ENCODE measurements at regions of chr1 and their contacts with region 1.

Region 1: DNA sequence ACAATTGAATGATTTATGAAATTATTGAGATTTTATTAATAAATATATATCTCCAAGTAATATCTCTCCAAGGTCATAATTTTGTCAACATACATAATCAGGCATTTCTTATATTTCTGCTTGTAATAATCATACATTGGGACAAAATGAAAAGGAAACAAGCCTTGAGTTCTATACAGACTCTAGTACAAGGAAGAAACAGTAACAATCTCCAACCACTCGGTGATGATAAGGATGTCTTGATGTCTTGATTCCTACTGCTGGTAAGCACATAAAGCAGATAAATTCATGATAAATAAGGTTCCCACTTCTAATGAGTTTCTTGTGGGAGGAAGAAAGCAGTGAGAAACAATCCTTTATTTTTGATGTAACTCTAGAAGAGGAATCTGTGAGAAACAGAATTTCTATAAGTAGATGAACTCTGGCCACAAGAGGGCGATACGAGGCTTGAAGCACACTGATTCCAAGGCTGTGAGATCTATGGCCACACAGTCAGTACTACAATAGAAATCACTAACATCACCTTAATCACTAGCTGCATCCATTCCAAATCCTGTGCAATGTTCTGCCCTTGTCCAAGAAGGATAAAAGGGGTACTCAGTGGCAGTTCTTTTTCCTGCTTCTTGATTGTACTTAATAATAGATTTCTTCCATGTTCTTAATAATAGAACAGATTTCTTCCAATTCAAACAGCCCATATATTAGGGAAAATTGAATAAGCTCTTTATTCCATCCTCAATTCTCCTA is 41.4 kb upstream of the LRRC8B start:
- DNase-seq: peak; percentile 80

Region 2: GRCh38 chr1:89598450-89599331 is 115.5 kb after region 1 on chr1:
- intact Hi-C with region 1: loop called in 1 of 2 experiments (anchors 5 kb)
- DNase-seq: no peak

Region 3: DNA sequence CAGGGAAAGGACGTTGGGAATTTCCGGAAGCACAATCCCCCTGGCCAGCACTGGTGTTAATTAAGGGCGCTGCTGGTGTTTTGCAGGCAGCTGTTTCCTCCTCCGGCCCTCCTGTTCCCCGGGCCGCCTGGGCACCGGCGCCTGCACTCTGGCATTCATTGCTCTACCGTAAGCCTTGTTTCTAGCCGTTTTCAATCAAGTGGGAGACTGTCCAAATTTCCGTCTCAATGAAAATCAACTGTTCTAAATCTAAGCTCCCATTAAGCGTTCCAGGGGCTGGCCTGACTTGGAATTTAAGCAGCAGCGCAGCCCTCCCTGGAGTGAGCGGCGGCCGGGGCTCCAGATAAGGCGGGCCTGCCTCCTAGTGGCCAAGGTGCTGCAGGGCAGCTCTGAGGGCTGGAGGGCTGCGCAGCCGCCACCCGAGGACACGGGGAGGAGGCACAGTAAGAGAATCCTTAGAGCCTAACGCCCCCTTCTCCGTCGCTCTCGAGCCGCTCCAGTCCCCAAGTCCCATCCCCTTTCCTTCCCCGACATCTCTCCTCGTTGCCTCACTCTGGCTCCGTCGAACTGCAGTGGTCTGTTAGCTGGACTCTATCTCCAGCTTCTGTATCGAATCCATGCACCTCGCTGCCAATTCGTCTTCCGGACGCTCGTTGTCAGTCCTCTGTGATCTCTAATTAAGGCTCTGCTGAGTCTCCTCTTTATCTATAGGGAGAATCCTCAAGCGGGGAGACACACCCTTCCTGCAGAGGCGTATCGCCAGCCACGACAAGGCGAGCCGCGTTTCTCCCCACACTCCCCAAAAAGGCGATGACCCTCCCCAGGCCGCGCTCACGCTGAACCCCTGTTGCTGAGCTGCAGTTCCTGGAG is 279.8 kb after region 1 on chr1:
- intact Hi-C with region 1: loop called in 1 of 2 experiments (anchors 5 kb)
- DNase-seq: peak; percentile 96

Region 4: DNA sequence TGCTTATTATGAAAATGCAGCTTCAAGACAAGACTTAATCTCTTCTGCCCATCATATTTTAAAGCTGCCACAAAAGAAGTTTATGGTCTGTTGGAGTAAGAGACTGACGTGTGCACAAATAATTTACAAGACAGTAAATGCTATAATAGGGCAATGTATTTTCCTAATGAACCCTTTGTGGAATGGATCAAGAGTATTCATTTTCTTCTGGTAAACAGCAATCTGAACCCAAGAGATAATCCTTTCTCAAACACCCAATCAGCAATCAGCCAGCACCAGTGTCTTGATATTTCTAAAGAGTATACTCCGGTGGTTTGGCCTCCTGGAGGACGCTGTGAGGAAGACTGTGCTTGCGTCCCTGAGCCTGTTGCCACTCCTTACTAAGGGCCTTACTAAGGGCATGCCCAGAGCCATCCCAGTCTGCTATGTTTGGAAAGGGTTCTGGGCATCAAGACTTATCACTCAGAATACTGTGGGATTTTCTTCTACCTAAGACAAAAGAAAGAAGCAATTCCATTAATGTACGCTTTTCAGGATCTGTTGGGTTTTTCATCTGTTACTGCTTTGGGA is 288.9 kb after region 1 on chr1:
- intact Hi-C with region 1: loop called in 1 of 2 experiments (anchors 10 kb)
- DNase-seq: no peak

Region 5: DNA sequence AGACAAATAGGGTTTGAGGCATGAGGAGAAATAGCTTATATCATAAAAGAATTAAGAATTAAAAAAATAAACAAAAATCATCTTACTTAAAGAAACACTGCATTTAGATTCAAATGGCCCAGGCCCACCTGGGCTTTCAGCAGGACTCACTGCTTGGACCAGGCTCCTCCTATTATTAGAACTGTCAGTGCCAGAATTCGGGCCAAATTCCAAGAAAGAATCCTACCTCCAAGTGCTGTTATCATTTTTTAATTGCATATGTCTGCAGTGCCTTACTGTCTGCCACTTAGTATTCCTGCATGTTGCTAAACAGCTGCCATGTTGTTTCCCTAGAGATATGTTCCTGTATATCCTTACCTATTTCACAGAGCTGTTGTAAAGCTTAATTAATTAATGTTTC is 1121.9 kb after region 1 on chr1:
- intact Hi-C with region 1: no loop called
- DNase-seq: no peak